SK-N-SH (cell line): ENCODE measurements at regions of chr15 and their contacts with region 1.

Region 1: DNA sequence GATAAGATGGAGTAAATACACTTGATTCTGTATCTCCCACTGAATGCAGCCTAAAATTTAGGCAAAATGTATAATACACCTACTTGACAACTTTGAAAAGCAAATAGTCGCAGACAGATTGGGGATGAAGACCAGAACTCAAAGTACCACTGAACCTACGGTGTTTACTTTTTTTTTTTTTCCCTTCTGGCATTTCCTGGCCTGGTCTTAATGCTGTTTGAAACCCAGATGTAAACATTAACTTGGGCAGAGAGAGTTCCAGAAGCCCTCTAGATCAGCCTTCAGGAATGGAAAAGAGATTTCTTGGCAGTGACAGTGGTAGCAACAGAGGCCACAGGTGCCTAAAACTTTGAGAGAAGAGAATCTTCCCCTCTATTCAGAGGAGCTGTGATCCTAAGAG is 27.8 kb downstream of the ALPK3 start:
- DNase-seq: no peak
- H3K4me3 ChIP-seq: no peak overlapping the region
- H3K27ac ChIP-seq: no peak overlapping the region
- H3K4me1 ChIP-seq: peaks cover 11 to 13% of the 10 kb centered on the region in 2 experiments; a peak in 3 of 4 replicates
- H3K27me3 ChIP-seq: no peaks in the 10 kb centered on the region
- CTCF ChIP-seq: no peak
- EP300 ChIP-seq: no peak
- RAD21 ChIP-seq: no peak

Region 2: GRCh38 chr15:84833447-84834228 is 11.3 kb before region 1 on chr15:
- CTCF ChIA-PET with region 1: interaction called, 38 read pairs
- POLR2A ChIA-PET with region 1: no interaction called
- DNase-seq: no peak
- H3K4me3 ChIP-seq: no peak overlapping the region
- H3K27ac ChIP-seq: no peak overlapping the region; a peak in 1 of 4 replicates
- H3K4me1 ChIP-seq: peaks cover 7 to 10% of the 10 kb centered on the region in 2 experiments; a peak in 2 of 4 replicates
- H3K27me3 ChIP-seq: no peaks in the 10 kb centered on the region
- CTCF ChIP-seq: no peak
- EP300 ChIP-seq: no peak
- RAD21 ChIP-seq: no peak